Activated naive CD4-positive, alpha-beta T cell treated with anti-CD3 and anti-CD28 coated beads for 36 hours (primary cell): ENCODE measurements at regions of chr11 and their contacts with region 1.

Region 1: DNA sequence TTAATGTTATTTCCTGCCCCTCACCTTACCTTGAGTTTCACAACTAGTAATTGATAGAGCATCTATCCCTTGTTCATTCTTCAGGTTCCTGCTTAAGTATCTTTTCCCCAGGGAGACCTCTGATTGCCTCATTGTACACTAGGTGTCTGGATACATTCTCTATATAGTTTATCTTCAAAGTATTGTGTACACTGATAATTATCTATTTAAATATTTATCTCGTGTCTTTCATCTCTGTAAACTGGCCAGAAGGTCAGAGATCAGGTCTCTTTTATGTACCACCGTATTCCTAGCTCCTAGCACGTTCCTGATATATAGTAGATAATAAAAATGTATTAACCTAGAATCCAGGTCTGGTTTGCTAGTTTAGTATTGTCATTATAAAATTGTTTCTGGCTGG is 6.4 kb downstream of the TMEM126B start:
- DNase-seq: no peak
- H3K4me3 Mint-ChIP-seq: no peak overlapping the region
- H3K27ac Mint-ChIP-seq: no peak overlapping the region
- H3K4me1 Mint-ChIP-seq: peaks cover 11% of the 10 kb centered on the region
- H3K27me3 Mint-ChIP-seq: no peaks in the 10 kb centered on the region

Region 2: DNA sequence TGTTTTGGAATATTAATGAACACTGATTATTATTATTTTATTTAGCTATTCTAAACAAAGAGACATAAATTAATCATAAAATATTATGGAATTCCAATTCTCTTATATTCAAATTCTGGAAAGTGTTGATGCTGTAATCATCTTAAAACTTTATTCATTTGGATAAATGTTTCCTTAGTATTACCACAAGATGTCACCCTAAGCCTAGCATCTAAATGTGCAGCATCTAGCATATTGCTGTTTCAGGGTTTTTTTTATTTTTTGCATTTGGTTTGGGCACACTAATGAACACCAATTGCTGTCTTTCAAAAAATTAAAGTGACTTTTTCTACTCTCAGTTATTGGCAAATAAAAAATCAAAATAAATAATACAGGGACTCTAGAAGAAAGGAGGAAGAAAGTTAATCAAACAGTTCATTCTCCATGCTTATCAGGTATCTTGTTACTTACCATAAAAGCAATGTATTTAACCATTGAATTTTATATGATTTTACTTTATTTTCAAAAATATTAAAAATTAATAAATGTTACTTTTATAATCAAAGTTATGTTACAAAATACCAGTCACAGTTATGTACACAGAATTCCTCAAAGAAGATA is 39.4 kb before region 1 on chr11:
- CTCF ChIA-PET with region 1: no interaction called
- intact Hi-C with region 1: no loop called
- DNase-seq: no peak
- H3K4me3 Mint-ChIP-seq: no peak overlapping the region
- H3K27ac Mint-ChIP-seq: no peak overlapping the region
- H3K4me1 Mint-ChIP-seq: no peaks in the 10 kb centered on the region
- H3K27me3 Mint-ChIP-seq: no peaks in the 10 kb centered on the region

Region 3: GRCh38 chr11:85647604-85648299 is 13.0 kb after region 1 on chr11 and contains the start of gene TMEM126A:
- CTCF ChIA-PET with region 1: interaction called, 10 read pairs
- intact Hi-C with region 1: no loop called
- DNase-seq: peak; percentile 96
- H3K4me3 Mint-ChIP-seq: peak within 1 kb of the TSS; percentile 90
- H3K27ac Mint-ChIP-seq: peak within 1 kb of the TSS; percentile 96
- H3K4me1 Mint-ChIP-seq: peaks cover 29% of the 10 kb centered on the region
- H3K27me3 Mint-ChIP-seq: peaks cover 6% of the 10 kb centered on the region
- total RNA-seq, gene TMEM126A: 47.5 to 56.2 TPM